Activated CD4-positive, alpha-beta T cell treated with anti-CD3 and anti-CD28 coated beads for 36 hours (primary cell): ENCODE measurements at regions of chr2 and their contacts with region 1.

Region 1: DNA sequence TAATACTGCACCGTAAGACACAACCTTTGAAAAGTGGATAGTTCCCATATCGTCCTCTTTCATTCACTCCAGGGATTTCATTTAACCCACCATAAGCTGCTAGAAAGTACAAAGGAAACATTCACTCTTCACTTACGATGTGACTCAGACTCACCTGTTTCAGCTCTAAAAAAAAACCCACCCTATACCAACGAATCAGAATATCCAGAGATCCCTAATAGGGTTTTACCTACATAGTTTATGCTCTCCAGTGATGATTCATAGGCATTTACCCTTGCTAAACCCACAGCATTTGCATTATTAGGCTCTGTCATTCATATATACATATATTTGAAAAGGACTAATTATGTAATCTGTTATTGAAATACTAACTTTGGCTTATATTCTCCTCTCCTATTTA is 60.2 kb downstream of the PRPF40A start:
- DNase-seq: no peak
- ATAC-seq: peak; percentile 75
- H3K4me3 Mint-ChIP-seq: no peak overlapping the region
- H3K27ac Mint-ChIP-seq: peak overlapping the region; percentile 20
- H3K4me1 Mint-ChIP-seq: peaks cover 18% of the 10 kb centered on the region
- H3K27me3 Mint-ChIP-seq: no peaks in the 10 kb centered on the region

Region 2: GRCh38 chr2:152611458-152612231 is 45.4 kb before region 1 on chr2:
- CTCF ChIA-PET with region 1: no interaction called
- POLR2A ChIA-PET with region 1: no interaction called
- intact Hi-C with region 1: no loop called
- DNase-seq: no peak
- ATAC-seq: no peak
- H3K4me3 Mint-ChIP-seq: no peak overlapping the region
- H3K27ac Mint-ChIP-seq: no peak overlapping the region
- H3K4me1 Mint-ChIP-seq: peaks cover 8% of the 10 kb centered on the region
- H3K27me3 Mint-ChIP-seq: no peaks in the 10 kb centered on the region

Region 3: GRCh38 chr2:152682663-152683062 is 25.6 kb after region 1 on chr2:
- CTCF ChIA-PET with region 1: no interaction called
- POLR2A ChIA-PET with region 1: no interaction called
- intact Hi-C with region 1: no loop called
- DNase-seq: no peak
- ATAC-seq: no peak
- H3K4me3 Mint-ChIP-seq: no peak overlapping the region
- H3K27ac Mint-ChIP-seq: no peak overlapping the region
- H3K4me1 Mint-ChIP-seq: peaks cover 31% of the 10 kb centered on the region
- H3K27me3 Mint-ChIP-seq: no peaks in the 10 kb centered on the region

Region 4: GRCh38 chr2:152694161-152694661 is 37.2 kb after region 1 on chr2:
- CTCF ChIA-PET with region 1: no interaction called
- POLR2A ChIA-PET with region 1: no interaction called
- intact Hi-C with region 1: loop called in 1 of 2 experiments (anchors 5 kb)
- DNase-seq: peak; percentile 70
- ATAC-seq: peak; percentile 92
- H3K4me3 Mint-ChIP-seq: peak overlapping the region; percentile 66
- H3K27ac Mint-ChIP-seq: peak overlapping the region; percentile 68
- H3K4me1 Mint-ChIP-seq: peaks cover 37% of the 10 kb centered on the region
- H3K27me3 Mint-ChIP-seq: no peaks in the 10 kb centered on the region

Region 5: DNA sequence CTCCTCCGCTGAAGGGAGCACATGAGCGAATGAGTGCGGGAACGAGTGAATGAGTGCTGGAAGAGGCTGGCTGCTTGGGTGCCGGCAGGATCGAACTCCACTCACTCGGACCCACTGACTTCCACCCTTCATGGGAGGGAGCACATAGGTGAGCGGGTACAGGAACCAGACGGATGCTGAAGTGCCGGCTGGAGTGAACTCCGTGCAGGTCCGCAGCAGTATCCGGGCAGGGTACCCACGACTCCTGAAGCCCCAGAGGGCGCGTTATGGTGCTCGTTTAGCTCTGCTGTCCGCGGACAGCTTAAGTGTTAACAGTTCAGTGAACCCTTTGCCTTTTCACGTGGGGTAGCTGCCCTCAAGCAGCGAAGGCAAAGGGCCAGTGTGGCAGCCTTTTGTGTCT is 798.4 kb after region 1 on chr2:
- CTCF ChIA-PET with region 1: no interaction called
- POLR2A ChIA-PET with region 1: no interaction called
- intact Hi-C with region 1: no loop called
- DNase-seq: no peak
- ATAC-seq: no peak
- H3K4me3 Mint-ChIP-seq: no peak overlapping the region
- H3K27ac Mint-ChIP-seq: no peak overlapping the region
- H3K4me1 Mint-ChIP-seq: no peaks in the 10 kb centered on the region
- H3K27me3 Mint-ChIP-seq: peaks cover 4% of the 10 kb centered on the region